ENCODE measurements at regions of chr20 and their contacts with region 1.

Region 1: GRCh38 chr20:46363800-46364634 is 42.4 kb downstream of the ELMO2 start:
- DNase-seq: peak; percentile 97 to 98
- H3K4me3 ChIP-seq: peak overlapping the region; percentile 86
- H3K4me3 Mint-ChIP-seq: peak overlapping the region; percentile 88
- H3K27ac Mint-ChIP-seq: peak overlapping the region; percentile 83
- H3K4me1 ChIP-seq: peaks cover 11% of the 10 kb centered on the region
- H3K4me1 Mint-ChIP-seq: peaks cover 14% of the 10 kb centered on the region
- H3K27me3 ChIP-seq: no peaks in the 10 kb centered on the region
- H3K27me3 Mint-ChIP-seq: no peaks in the 10 kb centered on the region
- CTCF ChIP-seq: no peak

Region 2: GRCh38 chr20:46349035-46349741 is 14.8 kb before region 1 on chr20:
- CTCF ChIA-PET with region 1: interaction called, 3 read pairs
- POLR2A ChIA-PET with region 1: interaction called, 28 read pairs
- intact Hi-C with region 1: loop called (anchors 1 kb)
- DNase-seq: peak in 1 of 2 experiments; percentile 81
- H3K4me3 ChIP-seq: no peak overlapping the region
- H3K4me3 Mint-ChIP-seq: no peak overlapping the region
- H3K27ac Mint-ChIP-seq: no peak overlapping the region
- H3K4me1 ChIP-seq: peaks cover 17% of the 10 kb centered on the region
- H3K4me1 Mint-ChIP-seq: peaks cover 25% of the 10 kb centered on the region
- H3K27me3 ChIP-seq: no peaks in the 10 kb centered on the region; the same call in 1 of the 2 replicates
- H3K27me3 Mint-ChIP-seq: peaks cover 6% of the 10 kb centered on the region
- CTCF ChIP-seq: peak; percentile 91 to 92

Measured in Caco-2 (cell line).